A549 (cell line): ENCODE measurements at regions of chr4 and their contacts with region 1.

Region 1: GRCh38 chr4:102620697-102621497 is 119.7 kb downstream of the NFKB1 start:
- DNase-seq: peak; percentile 62 to 82
- ATAC-seq: peak; percentile 93 to 95
- H3K4me3 ChIP-seq: peak overlapping the region; percentile 23; the same call in 2 of the 3 replicates
- H3K27ac ChIP-seq: peak overlapping the region; percentile 82 to 87
- H3K4me1 ChIP-seq: peaks cover 52% of the 10 kb centered on the region
- CTCF ChIP-seq: peak; percentile 78
- EP300 ChIP-seq: no peak
- POLR2A ChIP-seq: no peak
- RAD21 ChIP-seq: peak; percentile 88 to 89

Region 2: GRCh38 chr4:102610476-102610875 is 10.4 kb before region 1 on chr4:
- CTCF ChIA-PET with region 1: interaction called, 10 read pairs
- POLR2A ChIA-PET with region 1: no interaction called
- DNase-seq: no peak
- ATAC-seq: 0 out of 6 replicates have a peak, but pooled peaks of 1 of the 2 experiments have one; percentile 43
- H3K4me3 ChIP-seq: no peak overlapping the region
- H3K27ac ChIP-seq: no peak overlapping the region
- H3K4me1 ChIP-seq: no peaks in the 10 kb centered on the region
- CTCF ChIP-seq: no peak
- EP300 ChIP-seq: no peak
- POLR2A ChIP-seq: no peak
- RAD21 ChIP-seq: no peak

Region 3: DNA sequence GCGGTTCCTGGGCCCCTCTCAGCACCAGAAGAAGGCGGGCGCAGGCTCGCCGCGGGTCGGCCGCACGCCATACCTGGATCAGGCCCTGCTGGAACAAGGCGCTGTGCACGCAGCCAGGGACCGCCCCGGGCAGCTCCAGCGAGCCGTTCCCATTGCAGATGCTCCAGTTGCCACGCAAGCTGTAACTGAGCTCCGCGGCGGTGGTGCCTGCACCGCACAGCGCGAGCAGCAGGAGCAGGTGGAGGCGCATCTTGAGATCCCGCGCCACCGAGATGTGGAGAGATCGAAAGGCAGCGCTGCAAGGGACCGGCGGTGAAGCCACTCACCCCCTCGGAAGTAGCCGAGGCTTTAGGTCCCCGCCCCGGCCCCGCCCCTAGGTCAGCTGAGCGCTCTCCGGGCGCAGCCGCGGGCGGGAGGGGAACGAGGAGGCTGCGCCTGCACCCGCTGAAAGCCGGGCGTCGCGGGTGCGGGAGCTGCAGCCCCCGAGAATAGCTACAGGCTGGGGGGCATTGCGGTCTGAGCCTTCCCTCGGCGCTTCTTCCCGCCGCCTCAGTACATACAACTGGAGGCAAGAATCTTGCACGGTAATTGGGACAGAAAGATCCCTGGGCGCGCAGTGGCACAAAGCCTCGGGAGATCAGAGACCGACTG is 139.9 kb after region 1 on chr4 and contains the start of gene MANBA:
- CTCF ChIA-PET with region 1: interaction called, 5 read pairs
- POLR2A ChIA-PET with region 1: interaction called, 11 read pairs
- DNase-seq: peak; percentile 72 to 85
- ATAC-seq: peak; percentile 98
- H3K4me3 ChIP-seq: peak within 1 kb of the TSS; percentile 57
- H3K27ac ChIP-seq: peak within 1 kb of the TSS; percentile 82 to 87
- H3K4me1 ChIP-seq: peaks cover 14% of the 10 kb centered on the region; the same call in 2 of the 3 replicates
- CTCF ChIP-seq: no peak
- EP300 ChIP-seq: no peak
- POLR2A ChIP-seq: peak; percentile 72
- RAD21 ChIP-seq: peak in 1 of 2 experiments; percentile 20; a peak in 1 of 5 replicates
- polyA plus RNA-seq, gene MANBA: 10.4 and 12.4 TPM in 2 replicates

Region 4: DNA sequence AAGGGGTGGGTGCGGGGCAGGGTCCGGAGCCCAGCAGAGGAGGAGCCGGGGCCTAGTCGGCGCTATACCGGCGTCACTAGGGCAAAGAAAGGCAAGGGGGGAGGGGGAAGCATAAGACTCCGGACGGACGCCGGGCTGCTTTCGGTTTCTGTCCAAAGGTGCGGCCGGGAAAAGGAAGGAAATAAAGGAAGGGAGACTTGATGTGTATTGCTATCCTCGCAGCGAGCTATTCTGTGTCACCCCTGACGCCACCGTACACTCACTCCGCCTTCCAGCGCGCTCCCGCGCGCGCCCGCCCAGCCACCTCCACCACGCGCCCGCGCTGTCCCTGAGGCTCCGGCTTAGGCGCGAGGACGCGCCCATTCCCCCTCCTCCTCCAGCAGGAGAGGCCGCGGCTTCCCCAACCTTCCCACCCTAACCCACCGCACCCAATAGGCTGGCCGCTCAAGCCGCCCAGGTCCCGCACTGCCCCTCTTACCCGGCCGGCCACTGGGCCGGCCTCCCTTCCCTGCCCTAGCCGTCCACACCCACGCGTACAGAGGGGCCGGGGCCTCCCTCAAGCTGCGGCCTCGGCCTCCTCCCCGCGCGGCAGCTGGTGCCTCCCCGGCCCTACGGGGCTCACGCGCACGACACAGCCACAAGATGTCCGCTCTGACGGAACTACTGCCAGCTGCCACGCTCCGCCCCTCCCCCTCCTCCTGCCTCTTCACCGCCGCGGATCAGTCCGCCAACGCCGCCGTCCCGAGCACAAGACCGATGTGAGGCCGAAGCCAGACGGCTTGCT is 206.2 kb after region 1 on chr4 and contains the start of gene UBE2D3:
- CTCF ChIA-PET with region 1: interaction called, 7 read pairs
- POLR2A ChIA-PET with region 1: interaction called, 36 read pairs
- DNase-seq: peak; percentile 24 to 97
- ATAC-seq: peak; percentile 68 to 73
- H3K4me3 ChIP-seq: peak within 1 kb of the TSS; percentile 95
- H3K27ac ChIP-seq: peak within 1 kb of the TSS; percentile 100
- H3K4me1 ChIP-seq: peaks cover 32% of the 10 kb centered on the region
- CTCF ChIP-seq: no peak
- EP300 ChIP-seq: peak in 1 of 2 experiments; percentile 39; a peak in 1 of 5 replicates
- POLR2A ChIP-seq: peak; percentile 74
- RAD21 ChIP-seq: peak in 1 of 2 experiments; percentile 2; a peak in 1 of 5 replicates
- polyA plus RNA-seq, gene UBE2D3: 254 and 338 TPM in 2 replicates

Region 5: GRCh38 chr4:102868781-102869568 is 248.1 kb after region 1 on chr4 and contains the start of gene CISD2:
- CTCF ChIA-PET with region 1: interaction called, 6 read pairs
- POLR2A ChIA-PET with region 1: interaction called, 14 read pairs
- DNase-seq: peak; percentile 67 to 91
- ATAC-seq: peak; percentile 95 to 97
- H3K4me3 ChIP-seq: peak within 1 kb of the TSS; percentile 89
- H3K27ac ChIP-seq: peak within 1 kb of the TSS; percentile 92 to 95
- H3K4me1 ChIP-seq: peaks cover 24% of the 10 kb centered on the region
- CTCF ChIP-seq: no peak
- EP300 ChIP-seq: no peak
- POLR2A ChIP-seq: peak; percentile 79
- RAD21 ChIP-seq: no peak
- polyA plus RNA-seq, gene CISD2: 59.1 and 84.1 TPM in 2 replicates

Region 6: DNA sequence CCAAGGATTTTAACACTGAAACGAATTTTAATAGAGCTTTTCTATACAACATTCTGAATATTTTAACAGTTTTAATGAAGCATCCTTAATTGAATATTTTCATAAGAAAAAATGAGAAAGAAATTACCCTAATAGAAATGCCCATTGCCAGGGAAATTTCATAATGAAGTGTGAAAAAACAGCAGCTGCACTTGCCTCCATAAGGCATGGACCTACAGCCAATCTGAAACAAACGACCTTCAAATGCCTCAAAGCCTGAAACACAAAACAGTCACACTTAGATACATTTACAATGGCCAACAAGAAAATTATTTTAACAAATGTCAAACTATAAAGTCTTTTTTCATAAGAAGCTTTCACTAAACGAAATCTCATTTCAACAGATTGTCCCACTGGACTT is 324.2 kb after region 1 on chr4:
- CTCF ChIA-PET with region 1: no interaction called
- POLR2A ChIA-PET with region 1: no interaction called
- DNase-seq: no peak
- ATAC-seq: no peak
- H3K4me3 ChIP-seq: no peak overlapping the region
- H3K27ac ChIP-seq: no peak overlapping the region
- H3K4me1 ChIP-seq: no peaks in the 10 kb centered on the region
- CTCF ChIP-seq: no peak
- EP300 ChIP-seq: no peak
- POLR2A ChIP-seq: no peak
- RAD21 ChIP-seq: no peak

Region 7: GRCh38 chr4:103008875-103009729 is 388.2 kb after region 1 on chr4:
- CTCF ChIA-PET with region 1: interaction called, 45 read pairs
- POLR2A ChIA-PET with region 1: interaction called, 3 read pairs
- DNase-seq: peak; percentile 46 to 70
- ATAC-seq: peak; percentile 84 to 92
- H3K4me3 ChIP-seq: no peak overlapping the region
- H3K27ac ChIP-seq: no peak overlapping the region
- H3K4me1 ChIP-seq: peaks cover 10% of the 10 kb centered on the region; the same call in 1 of the 3 replicates
- CTCF ChIP-seq: peak; percentile 74
- EP300 ChIP-seq: no peak
- POLR2A ChIP-seq: no peak
- RAD21 ChIP-seq: peak; percentile 87 to 93

Region 8: DNA sequence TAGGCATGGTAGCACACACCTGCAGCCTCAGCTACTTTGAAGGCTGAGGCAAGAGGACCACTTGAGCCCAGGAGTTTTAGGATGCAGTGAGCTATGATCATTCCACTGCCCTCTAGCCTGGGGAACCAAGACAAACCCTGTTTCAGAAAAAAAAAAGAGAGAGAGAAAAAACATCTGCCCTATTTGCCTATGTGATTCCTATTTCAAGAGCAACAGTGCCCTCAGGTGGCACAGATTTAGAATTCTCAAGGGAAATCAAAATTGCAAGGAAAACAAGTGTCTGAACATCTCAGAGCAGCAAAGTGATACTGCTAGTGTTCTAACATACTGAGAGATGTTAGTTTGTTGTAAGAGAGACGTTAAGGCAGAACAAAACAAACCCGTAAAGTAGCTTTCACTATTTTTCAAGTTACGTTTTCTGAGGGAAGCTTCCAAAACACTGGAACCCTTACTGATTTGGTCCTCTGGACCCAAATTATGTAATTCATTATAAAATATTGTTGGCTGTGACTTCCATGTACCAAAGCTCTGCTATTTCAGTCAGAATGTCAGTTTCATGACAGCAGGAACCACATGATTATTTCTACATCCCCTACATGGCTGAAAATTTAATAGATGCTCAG is 470.8 kb after region 1 on chr4:
- CTCF ChIA-PET with region 1: interaction called, 14 read pairs
- POLR2A ChIA-PET with region 1: no interaction called
- DNase-seq: peak in 1 of 2 experiments; percentile 66
- ATAC-seq: peak; percentile 64 to 73; a peak in 4 of 6 replicates
- H3K4me3 ChIP-seq: no peak overlapping the region
- H3K27ac ChIP-seq: no peak overlapping the region
- H3K4me1 ChIP-seq: no peaks in the 10 kb centered on the region; the same call in 2 of the 3 replicates
- CTCF ChIP-seq: peak; percentile 82
- EP300 ChIP-seq: no peak
- POLR2A ChIP-seq: no peak
- RAD21 ChIP-seq: peak; percentile 82 to 85